Activated CD8-positive, alpha-beta T cell treated with anti-CD3 and anti-CD28 coated beads for 36 hours (primary cell): ENCODE measurements at regions of chr19 and their contacts with region 1.

Region 1: DNA sequence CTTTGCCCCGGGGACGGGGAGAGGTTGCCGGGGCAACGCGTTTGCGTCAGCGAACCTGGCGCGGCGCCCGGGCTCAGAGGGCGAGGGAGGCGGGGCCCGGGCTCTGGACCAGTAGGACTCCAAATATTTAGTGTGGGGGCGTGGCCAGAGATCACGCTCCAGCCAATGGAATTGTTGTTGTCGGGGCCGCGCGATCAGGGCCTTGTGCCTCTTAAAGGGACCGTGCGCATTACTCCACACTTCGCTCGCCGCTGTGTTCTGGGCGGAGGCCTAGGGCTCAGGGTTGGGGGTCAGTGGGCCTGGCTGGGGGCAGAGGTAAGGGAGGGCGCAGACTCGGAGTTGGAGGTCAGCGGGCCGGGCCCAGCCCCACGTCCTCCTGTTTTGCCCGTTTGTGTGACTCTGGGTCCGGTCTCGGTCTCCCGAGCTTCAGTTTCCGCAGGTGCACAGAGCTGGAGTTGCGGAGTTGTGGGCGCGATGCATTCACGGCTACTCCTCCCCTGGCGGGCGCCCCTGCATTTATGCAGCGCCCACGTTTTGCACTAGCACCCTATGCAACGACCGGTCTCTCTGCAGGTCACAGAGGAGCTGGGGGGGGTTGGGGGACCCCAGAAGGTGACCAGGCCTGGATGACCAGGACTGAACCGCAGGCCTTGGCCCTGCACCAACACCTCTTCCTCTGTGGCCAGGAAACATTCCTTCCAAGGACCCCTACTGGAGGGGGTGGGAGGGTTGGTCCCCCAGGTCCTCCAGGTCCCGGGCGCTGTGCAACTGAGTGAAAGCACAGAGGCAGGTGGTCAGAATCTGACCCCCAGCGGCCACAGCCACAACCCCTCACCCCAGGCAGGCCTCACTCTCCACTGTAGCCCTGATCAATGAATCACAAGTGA is 10.7 kb upstream of the MKNK2 start:
- DNase-seq: peak; percentile 100
- ATAC-seq: peak; percentile 94
- H3K4me3 Mint-ChIP-seq: peak overlapping the region; percentile 85
- H3K27ac Mint-ChIP-seq: peak overlapping the region; percentile 91
- H3K4me1 Mint-ChIP-seq: peaks cover 40% of the 10 kb centered on the region
- H3K27me3 Mint-ChIP-seq: no peaks in the 10 kb centered on the region
- CTCF ChIP-seq: no peak

Region 2: DNA sequence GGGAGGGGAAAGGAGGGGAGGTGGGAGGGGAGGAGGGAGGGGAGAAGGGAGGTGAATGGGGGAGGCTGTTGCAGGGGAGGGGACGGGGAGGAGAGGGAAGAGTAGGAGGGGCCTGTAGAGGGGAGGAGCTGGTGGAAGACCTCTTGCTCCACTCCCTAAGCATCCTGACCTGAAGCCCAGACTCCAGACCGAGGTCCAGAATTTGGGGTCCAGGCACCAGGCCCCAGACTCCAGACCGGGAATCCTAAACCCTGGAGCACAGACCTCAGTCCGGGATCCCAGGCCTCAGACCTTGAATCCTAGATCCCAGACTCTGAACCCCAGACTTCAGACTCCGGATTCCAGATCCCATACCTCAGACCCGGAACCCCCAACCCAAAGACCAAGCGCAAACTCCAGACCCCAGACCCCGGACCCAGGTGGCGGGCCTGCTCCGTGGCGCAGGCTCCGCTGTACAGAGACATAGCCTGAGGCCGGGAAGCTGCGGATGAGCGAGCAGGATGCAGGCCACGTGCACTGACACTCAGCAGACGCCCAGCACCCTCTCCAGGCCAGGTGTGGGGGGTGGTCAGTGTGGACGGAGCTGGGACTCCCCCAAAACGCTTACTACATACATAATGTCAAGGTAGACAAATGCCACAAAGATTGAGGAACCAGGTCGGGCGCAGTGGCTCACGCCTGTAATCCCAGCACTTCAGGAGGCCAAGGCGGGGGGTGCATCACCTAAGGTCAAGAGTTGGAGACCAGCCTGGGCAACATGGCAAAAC is 45.5 kb before region 1 on chr19:
- CTCF ChIA-PET with region 1: interaction called, 5 read pairs
- POLR2A ChIA-PET with region 1: no interaction called
- intact Hi-C with region 1: loop called (anchors 5 kb)
- DNase-seq: peak; percentile 75
- ATAC-seq: peak; percentile 83
- H3K4me3 Mint-ChIP-seq: peak overlapping the region; percentile 69
- H3K27ac Mint-ChIP-seq: no peak overlapping the region
- H3K4me1 Mint-ChIP-seq: peaks cover 20% of the 10 kb centered on the region
- H3K27me3 Mint-ChIP-seq: no peaks in the 10 kb centered on the region
- CTCF ChIP-seq: no peak